Naive thymus-derived CD4-positive, alpha-beta T cell (primary cell): ENCODE measurements at regions of chr5 and their contacts with region 1.

Region 1: GRCh38 chr5:73565139-73565968 is at the starts of genes ANKRA2 and UTP15:
- DNase-seq: peak; percentile 95 to 99 (median 98)
- ATAC-seq: peak; percentile 99
- H3K4me3 ChIP-seq: peak within 1 kb of the TSS; percentile 71
- H3K4me3 Mint-ChIP-seq: peak within 1 kb of the TSS; percentile 91 to 100 (median 98)
- H3K27ac ChIP-seq: peak within 1 kb of the TSS; percentile 95
- H3K27ac Mint-ChIP-seq: peak within 1 kb of the TSS; percentile 96 to 100 (median 99)
- H3K4me1 ChIP-seq: peaks cover 11 to 26% of the 10 kb centered on the region in 2 donors
- H3K4me1 Mint-ChIP-seq: peaks cover 22 to 72% (median 53%) of the 10 kb centered on the region in 7 donors
- H3K27me3 ChIP-seq: no peaks in the 10 kb centered on the region
- H3K27me3 Mint-ChIP-seq: peaks cover 0 to 3% (median 0%) of the 10 kb centered on the region in 5 donors
- total RNA-seq, gene ANKRA2: 22.7 to 57.8 (median 41.5) TPM
- total RNA-seq, gene UTP15: 23.6 to 46.5 (median 25.2) TPM

Region 2: DNA sequence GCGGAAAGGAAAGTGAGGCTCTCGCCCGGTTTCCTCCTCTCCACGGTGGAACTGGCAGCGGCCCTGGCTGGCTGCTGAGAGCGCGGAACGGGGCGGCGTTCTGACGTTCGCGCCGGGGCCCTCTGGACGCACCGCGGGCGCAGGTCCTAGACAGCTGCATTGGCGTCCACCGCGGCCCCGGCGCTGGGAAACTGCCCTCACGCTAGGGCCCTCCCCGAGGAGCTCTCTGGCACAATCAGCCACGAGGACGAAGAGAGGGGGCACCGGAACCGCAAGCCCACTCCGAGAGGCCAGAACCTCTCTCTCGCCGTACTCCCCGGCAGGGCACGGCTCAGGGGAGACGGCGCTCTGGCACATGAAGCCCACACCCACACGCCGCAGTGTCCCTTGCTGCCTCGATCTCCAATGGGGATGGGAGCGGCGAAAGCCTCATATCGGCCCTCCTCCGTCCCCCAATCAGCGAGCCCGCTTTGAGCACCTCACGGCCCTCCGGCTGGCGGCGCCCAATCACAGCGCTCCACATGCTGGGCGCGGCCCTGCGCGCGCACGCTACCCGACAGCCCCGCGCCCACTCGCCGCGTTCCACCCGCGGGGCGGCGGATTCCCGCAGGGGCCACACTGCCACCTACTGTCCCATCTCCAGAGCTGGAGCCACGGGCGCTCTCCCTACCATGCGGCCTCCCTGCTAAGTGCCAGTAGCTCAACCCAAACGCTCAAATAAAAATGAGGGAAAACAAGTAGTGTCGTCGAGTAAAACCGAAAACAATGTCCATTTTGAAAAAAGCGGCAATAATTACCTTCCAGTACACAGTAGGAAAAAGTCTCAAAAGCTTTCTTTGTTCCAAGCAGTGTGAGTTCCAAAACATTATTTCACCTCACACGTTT is 1257.1 kb before region 1 on chr5:
- CTCF ChIA-PET with region 1: no interaction called
- POLR2A ChIA-PET with region 1: no interaction called
- intact Hi-C with region 1: loop called (anchors 5 to 10 kb)
- DNase-seq: peak; percentile 91 to 97 (median 95)
- ATAC-seq: peak; percentile 98
- H3K4me3 ChIP-seq: peak overlapping the region; percentile 93
- H3K4me3 Mint-ChIP-seq: peak overlapping the region; percentile 78 to 94 (median 92)
- H3K27ac ChIP-seq: peak overlapping the region; percentile 95
- H3K27ac Mint-ChIP-seq: peak overlapping the region; percentile 84 to 97 (median 91)
- H3K4me1 ChIP-seq: peaks cover 3 to 12% of the 10 kb centered on the region in 2 donors
- H3K4me1 Mint-ChIP-seq: peaks cover 9 to 38% (median 29%) of the 10 kb centered on the region in 7 donors
- H3K27me3 ChIP-seq: no peaks in the 10 kb centered on the region
- H3K27me3 Mint-ChIP-seq: no peaks in the 10 kb centered on the region

Region 3: DNA sequence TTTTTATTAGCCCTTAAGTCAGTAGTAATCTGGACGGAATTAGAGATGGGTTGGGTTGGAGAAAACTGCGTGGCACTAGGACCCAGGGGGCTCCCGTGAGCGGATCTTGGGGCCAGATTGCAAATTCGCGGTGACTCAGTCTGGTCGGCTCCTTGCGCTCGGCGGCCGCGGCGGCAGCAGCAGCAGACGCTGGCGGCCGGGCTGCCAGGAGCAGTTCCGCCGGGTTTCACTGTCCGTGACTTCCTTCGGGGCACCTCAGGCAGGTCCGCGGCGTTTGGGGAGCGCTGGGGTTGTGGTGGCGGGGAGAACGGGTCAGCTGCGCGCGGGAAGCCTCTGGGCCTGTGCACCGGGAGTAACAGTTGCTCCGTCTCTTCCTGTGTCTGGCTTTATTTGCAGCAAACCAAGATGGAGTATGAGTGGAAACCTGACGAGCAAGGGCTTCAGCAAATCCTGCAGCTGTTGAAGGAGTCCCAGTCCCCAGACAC is 717.3 kb before region 1 on chr5:
- CTCF ChIA-PET with region 1: no interaction called
- POLR2A ChIA-PET with region 1: interaction called, 3 read pairs
- intact Hi-C with region 1: loop called in 1 of 2 experiments (anchors 1 kb)
- DNase-seq: peak; percentile 67 to 86 (median 83)
- ATAC-seq: peak; percentile 94
- H3K4me3 ChIP-seq: peak overlapping the region; percentile 93
- H3K4me3 Mint-ChIP-seq: peak overlapping the region; percentile 92 to 99 (median 98)
- H3K27ac ChIP-seq: peak overlapping the region; percentile 86
- H3K27ac Mint-ChIP-seq: peak overlapping the region; percentile 93 to 98 (median 96)
- H3K4me1 ChIP-seq: peaks cover 24 to 31% of the 10 kb centered on the region in 2 donors
- H3K4me1 Mint-ChIP-seq: peaks cover 30 to 88% (median 64%) of the 10 kb centered on the region in 7 donors
- H3K27me3 ChIP-seq: no peaks in the 10 kb centered on the region
- H3K27me3 Mint-ChIP-seq: peaks cover 0 to 16% (median 0%) of the 10 kb centered on the region in 5 donors

Region 4: DNA sequence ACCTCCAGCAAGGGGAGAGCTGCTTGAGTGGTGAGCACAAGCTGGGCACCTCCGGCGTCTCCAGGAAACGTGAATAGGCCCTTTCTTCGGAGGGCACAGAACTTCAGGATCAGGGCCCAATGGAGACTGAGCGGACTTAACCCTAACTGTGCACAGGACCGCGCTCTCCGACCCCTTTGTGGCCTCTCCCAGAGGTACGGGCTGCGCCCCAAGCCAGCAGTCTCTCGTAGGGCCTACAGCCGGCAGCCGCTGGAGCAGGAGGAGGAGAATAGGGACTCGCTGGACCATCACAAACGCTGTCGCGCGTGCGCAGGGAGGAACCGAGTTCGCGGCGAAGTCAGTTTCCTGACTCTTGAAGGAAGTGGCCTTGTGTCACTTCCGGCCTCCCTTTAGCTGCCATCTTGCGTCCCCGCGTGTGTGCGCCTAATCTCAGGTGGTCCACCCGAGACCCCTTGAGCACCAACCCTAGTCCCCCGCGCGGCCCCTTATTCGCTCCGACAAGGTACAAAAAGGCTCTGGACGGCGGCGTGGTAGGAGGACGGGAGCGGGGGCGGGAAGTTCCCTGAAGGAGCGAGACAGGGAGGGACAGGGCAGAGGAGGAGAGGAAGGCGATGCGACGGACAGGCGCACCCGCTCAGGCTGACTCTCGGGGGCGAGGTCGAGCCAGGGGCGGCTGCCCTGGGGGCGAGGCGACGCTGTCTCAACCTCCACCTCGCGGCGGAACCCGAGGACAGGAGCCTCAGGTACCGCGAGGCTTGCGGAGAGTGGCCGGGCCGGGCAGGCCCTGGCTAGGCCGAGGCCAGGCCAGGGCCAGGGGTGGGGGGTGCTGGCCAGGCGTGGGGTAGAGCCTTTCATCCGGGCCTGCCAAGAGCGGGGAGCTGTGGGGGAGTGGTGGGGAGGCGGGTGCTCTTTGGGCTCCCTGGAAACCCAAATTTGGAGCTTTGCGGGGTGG is 67.0 kb before region 1 on chr5 and contains the start of gene BTF3:
- CTCF ChIA-PET with region 1: interaction called, 3 read pairs
- POLR2A ChIA-PET with region 1: interaction called, 29 read pairs
- intact Hi-C with region 1: loop called (anchors 1 kb)
- DNase-seq: peak; percentile 83 to 94 (median 91)
- ATAC-seq: peak; percentile 96
- H3K4me3 ChIP-seq: peak within 1 kb of the TSS; percentile 81
- H3K4me3 Mint-ChIP-seq: peak within 1 kb of the TSS; percentile 92 to 99 (median 97)
- H3K27ac ChIP-seq: peak within 1 kb of the TSS; percentile 93
- H3K27ac Mint-ChIP-seq: peak within 1 kb of the TSS; percentile 97 to 100 (median 99)
- H3K4me1 ChIP-seq: peaks cover 22 to 31% of the 10 kb centered on the region in 2 donors
- H3K4me1 Mint-ChIP-seq: peaks cover 26 to 57% (median 41%) of the 10 kb centered on the region in 7 donors
- H3K27me3 ChIP-seq: peaks cover 0 to 4% of the 10 kb centered on the region in 2 donors
- H3K27me3 Mint-ChIP-seq: peaks cover 4 to 15% (median 13%) of the 10 kb centered on the region in 5 donors
- total RNA-seq, gene BTF3: 557 to 758 (median 700) TPM

Region 5: DNA sequence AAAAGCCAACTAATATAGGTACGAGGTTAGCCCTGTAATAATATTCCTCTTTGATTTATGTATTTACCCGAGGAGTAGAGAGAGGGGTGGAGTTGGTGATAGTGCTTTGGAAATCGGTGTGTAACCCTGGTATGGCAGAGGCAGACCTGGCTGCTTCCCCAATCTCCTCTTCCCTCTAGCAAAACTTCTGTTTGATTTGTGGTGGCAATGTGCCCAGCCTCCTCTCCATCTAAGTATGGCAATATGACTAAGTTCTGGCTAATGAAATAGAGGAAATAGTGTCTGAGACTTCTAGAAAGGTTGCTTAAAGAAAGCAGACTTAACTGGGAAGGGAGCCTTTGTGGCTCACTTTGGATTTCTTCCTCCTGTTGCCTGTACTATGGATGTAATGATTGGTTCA is 584.0 kb after region 1 on chr5:
- CTCF ChIA-PET with region 1: no interaction called
- POLR2A ChIA-PET with region 1: no interaction called
- intact Hi-C with region 1: no loop called
- DNase-seq: no peak
- ATAC-seq: peak; percentile 54
- H3K4me3 ChIP-seq: no peak overlapping the region
- H3K4me3 Mint-ChIP-seq: no peak overlapping the region
- H3K27ac ChIP-seq: no peak overlapping the region
- H3K27ac Mint-ChIP-seq: no peak overlapping the region
- H3K4me1 ChIP-seq: no peaks in the 10 kb centered on the region
- H3K4me1 Mint-ChIP-seq: no peaks in the 10 kb centered on the region
- H3K27me3 ChIP-seq: no peaks in the 10 kb centered on the region
- H3K27me3 Mint-ChIP-seq: peaks cover 0 to 29% (median 17%) of the 10 kb centered on the region in 5 donors

Region 6: DNA sequence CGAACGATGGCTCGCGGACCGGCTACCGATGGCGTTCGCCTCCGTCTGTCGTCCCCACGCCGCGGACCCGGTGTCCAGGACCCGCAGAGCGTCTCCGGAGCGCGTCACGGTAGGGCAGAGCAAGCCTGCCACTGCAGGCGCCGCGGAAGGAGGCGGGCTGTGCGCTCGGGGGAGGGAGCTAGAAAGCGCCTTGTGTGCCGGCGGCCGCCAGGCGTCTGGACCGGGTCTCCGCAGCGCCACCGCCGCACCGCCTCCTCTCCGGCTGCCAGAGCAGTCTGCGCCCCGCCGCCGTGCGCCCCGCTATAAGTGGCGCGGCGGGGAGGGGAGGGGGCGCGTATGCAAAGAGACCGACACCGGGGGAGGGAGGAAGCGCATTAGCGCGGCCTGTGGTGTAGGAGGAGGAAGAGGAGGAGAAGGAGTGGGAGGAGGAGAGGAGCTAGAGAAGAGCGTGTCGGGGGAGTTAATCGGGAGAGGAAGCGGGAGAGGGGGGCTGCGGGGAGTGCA is 1075.1 kb after region 1 on chr5 and contains the start of gene ENC1:
- CTCF ChIA-PET with region 1: no interaction called
- POLR2A ChIA-PET with region 1: no interaction called
- intact Hi-C with region 1: loop called in 1 of 2 experiments (anchors 10 kb)
- DNase-seq: peak; percentile 64 to 88 (median 75)
- ATAC-seq: peak; percentile 86
- H3K4me3 ChIP-seq: peak within 1 kb of the TSS; percentile 42
- H3K4me3 Mint-ChIP-seq: peak within 1 kb of the TSS; percentile 81 to 99 (median 92)
- H3K27ac ChIP-seq: peak within 1 kb of the TSS; percentile 72
- H3K27ac Mint-ChIP-seq: peak within 1 kb of the TSS in 8 of 9 donors; percentile 42 to 90 (median 74)
- H3K4me1 ChIP-seq: peaks cover 3 to 4% of the 10 kb centered on the region in 2 donors
- H3K4me1 Mint-ChIP-seq: peaks cover 28 to 45% (median 31%) of the 10 kb centered on the region in 7 donors
- H3K27me3 ChIP-seq: no peaks in the 10 kb centered on the region
- H3K27me3 Mint-ChIP-seq: peaks cover 0 to 79% (median 34%) of the 10 kb centered on the region in 5 donors
- total RNA-seq, gene ENC1: 1.3 to 18.1 (median 1.6) TPM

Region 7: GRCh38 chr5:75236322-75237316 is 1671.3 kb after region 1 on chr5 and contains the start of gene ANKRD31:
- CTCF ChIA-PET with region 1: no interaction called
- POLR2A ChIA-PET with region 1: no interaction called
- intact Hi-C with region 1: loop called in 1 of 2 experiments (anchors 5 kb)
- DNase-seq: peak; percentile 83 to 97 (median 93)
- ATAC-seq: peak; percentile 100
- H3K4me3 ChIP-seq: peak within 1 kb of the TSS; percentile 69
- H3K4me3 Mint-ChIP-seq: peak within 1 kb of the TSS; percentile 78 to 99 (median 96)
- H3K27ac ChIP-seq: peak within 1 kb of the TSS; percentile 80
- H3K27ac Mint-ChIP-seq: peak within 1 kb of the TSS; percentile 89 to 99 (median 98)
- H3K4me1 ChIP-seq: peaks cover 0 to 17% of the 10 kb centered on the region in 2 donors
- H3K4me1 Mint-ChIP-seq: peaks cover 3 to 22% (median 18%) of the 10 kb centered on the region in 7 donors
- H3K27me3 ChIP-seq: no peaks in the 10 kb centered on the region
- H3K27me3 Mint-ChIP-seq: peaks cover 0 to 4% (median 0%) of the 10 kb centered on the region in 5 donors
- total RNA-seq, gene ANKRD31: 0.29 to 1.6 (median 0.93) TPM